Psoas muscle (tissue), 8 donors: ENCODE measurements at regions of chr4 and their contacts with region 1.

Region 1: DNA sequence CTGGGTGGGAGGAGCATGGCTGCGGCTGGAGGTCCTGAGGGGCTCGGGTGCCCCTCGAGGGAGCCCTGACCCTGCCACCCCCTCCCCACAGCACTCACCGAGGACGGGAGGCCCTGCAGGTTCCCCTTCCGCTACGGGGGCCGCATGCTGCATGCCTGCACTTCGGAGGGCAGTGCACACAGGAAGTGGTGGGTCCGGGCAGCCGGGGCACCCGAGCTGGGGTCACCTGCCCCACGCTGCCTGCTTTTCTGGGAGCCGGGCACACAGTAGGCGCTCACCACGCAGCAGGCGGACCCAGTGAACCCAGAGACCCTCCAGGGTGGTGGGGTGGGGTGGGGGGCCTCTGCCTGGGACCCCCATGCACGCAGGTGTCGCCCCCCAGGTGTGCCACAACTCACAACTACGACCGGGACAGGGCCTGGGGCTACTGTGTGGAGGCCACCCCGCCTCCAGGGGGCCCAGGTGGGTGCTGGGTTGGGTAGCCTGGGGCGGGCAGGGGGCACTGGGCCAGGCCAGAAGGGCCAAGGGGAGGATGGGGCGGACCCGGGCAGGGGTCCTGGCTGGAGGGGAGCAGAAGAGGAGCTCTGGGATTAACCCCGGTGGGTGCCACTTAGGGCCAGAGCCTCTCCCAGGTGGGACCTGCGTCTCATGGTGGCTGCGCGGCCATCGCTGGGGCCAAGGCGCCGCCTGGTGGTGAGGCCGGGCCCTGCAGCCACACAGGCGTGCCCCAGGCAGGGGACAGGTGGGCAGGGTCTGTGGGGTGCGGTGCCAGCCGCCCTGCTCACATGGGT is 1.4 kb downstream of the HGFAC start:
- DNase-seq: peak; percentile 56 to 77
- ATAC-seq: peak; percentile 78 to 88 (median 84)
- H3K4me3 ChIP-seq: no peak overlapping the region
- H3K27ac ChIP-seq: no peak overlapping the region
- H3K4me1 ChIP-seq: no peaks in the 10 kb centered on the region
- H3K27me3 ChIP-seq: no peaks in the 10 kb centered on the region
- CTCF ChIP-seq: peak; percentile 100

Region 2: DNA sequence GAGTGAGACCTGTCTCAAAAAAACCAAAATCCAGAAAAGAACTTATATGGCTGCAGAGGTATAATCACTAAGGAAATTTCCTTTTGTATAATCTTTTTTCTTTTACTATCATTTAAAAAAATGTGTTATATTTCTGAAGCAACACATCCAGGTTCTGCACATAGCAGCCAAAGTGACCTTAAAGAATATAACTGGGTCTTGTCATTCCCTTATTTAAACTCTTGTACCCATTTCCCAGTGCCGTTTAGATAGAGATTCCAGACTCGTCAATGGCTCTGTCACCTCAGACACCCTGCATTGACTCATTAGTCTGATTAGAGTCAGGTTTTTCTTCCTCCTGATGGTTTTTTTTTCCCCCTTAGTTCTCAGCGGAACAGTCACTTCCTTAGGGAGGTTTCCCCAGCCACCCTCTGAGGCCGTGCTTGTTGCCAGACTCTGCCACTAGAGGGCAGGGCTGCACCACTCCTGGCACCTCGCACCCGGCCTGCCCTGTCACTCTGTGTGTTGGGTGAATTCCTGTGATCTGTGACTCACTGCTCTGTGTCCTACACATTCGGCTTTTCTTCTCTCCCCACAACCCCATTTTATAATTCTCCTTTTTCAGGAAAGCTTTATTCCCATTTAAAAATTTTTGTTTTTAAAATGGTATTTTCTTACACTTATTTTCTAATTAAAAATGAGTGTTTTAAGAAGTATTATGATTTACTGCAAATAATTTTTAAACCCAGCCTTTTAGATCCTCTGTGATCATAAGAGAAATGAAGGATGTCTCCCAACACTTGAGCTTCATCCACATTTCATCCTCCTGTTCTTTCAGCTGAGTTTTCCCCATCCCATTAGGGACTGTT is 336.6 kb before region 1 on chr4:
- intact Hi-C with region 1: loop called in 1 of 2 experiments (anchors 5 kb)
- DNase-seq: peak; percentile 88 to 94
- ATAC-seq: peak; percentile 98 to 100 (median 100)
- H3K4me3 ChIP-seq: no peak overlapping the region
- H3K27ac ChIP-seq: peak overlapping the region; percentile 62
- H3K4me1 ChIP-seq: peaks cover 16% of the 10 kb centered on the region
- H3K27me3 ChIP-seq: no peaks in the 10 kb centered on the region
- CTCF ChIP-seq: peak; percentile 98

Region 3: DNA sequence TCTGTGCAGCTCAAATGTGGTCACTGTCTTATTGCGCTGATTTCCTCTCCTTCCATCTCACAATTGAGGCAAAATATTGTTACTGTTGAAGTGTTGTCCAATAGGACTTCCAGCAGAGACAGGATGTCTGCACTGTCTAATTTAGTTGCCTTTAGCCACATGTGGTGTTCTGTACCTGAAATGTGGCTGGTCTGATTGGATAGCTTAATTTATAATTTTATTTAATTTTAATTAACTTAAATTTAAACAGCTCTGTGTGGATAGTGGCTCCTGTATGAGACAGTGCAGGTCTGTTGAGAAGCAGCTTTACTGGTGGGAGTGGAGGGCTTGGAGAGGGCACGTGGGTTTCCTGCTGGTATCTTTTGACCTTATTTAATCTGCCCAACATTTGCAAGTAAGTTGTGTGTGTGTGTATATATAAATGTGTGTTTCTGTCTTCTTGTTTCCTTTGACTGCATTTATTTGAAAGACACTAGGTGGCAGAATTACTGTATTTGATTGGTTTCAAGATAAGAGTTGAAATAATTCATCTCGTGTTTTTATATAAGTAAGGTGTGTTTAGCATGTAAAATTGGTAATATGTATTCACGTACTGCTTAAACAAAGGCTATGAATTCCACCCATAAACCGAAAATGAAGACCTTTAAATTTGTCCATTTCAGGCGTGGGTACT is 249.5 kb before region 1 on chr4:
- intact Hi-C with region 1: loop called (anchors 5 kb)
- DNase-seq: no peak
- ATAC-seq: no peak
- H3K4me3 ChIP-seq: no peak overlapping the region
- H3K27ac ChIP-seq: no peak overlapping the region
- H3K4me1 ChIP-seq: no peaks in the 10 kb centered on the region
- H3K27me3 ChIP-seq: no peaks in the 10 kb centered on the region
- CTCF ChIP-seq: peak; percentile 38

Region 4: GRCh38 chr4:3201718-3202702 is 241.1 kb before region 1 on chr4:
- intact Hi-C with region 1: loop called in 1 of 2 experiments (anchors 5 kb)
- DNase-seq: no peak
- ATAC-seq: peak; percentile 55 to 79 (median 74)
- H3K4me3 ChIP-seq: no peak overlapping the region
- H3K27ac ChIP-seq: peak overlapping the region; percentile 75
- H3K4me1 ChIP-seq: peaks cover 52% of the 10 kb centered on the region
- H3K27me3 ChIP-seq: no peaks in the 10 kb centered on the region
- CTCF ChIP-seq: no peak

Region 5: GRCh38 chr4:3346146-3346545 is 97.0 kb before region 1 on chr4:
- intact Hi-C with region 1: loop called (anchors 1 to 2 kb)
- DNase-seq: no peak
- ATAC-seq: peak; percentile 93 to 97 (median 94)
- H3K4me3 ChIP-seq: no peak overlapping the region
- H3K27ac ChIP-seq: no peak overlapping the region
- H3K4me1 ChIP-seq: peaks cover 6% of the 10 kb centered on the region
- H3K27me3 ChIP-seq: no peaks in the 10 kb centered on the region
- CTCF ChIP-seq: peak; percentile 93